CD14-positive monocyte (primary cell): ENCODE measurements at regions of chr10 and their contacts with region 1.

Region 1: DNA sequence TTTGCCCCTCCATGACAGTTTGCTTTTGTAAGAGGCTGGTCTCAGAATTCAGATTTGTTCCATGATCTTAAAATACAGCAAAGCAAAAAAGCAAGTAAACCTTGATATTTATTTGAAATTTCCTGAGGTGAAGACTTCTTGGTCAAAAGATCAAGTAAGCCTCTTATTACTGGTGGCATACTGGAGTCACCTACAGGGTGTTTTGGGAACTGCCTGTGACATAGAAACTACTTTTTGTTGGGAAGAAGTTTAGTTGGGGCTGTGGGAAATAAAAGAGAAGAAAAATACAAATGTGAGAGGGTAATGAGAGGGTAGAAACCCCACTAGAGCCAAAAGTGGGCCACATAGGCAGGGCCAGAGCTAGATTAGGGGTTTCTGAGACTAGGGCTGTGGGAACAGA is 217.9 kb downstream of the OTUD1 start:
- DNase-seq: peak; percentile 29 to 60 (median 56)
- H3K4me3 ChIP-seq: no peak overlapping the region
- H3K4me3 Mint-ChIP-seq: no peak overlapping the region
- H3K27ac ChIP-seq: no peak overlapping the region
- H3K27ac Mint-ChIP-seq: no peak overlapping the region
- H3K4me1 ChIP-seq: no peaks in the 10 kb centered on the region
- H3K4me1 Mint-ChIP-seq: peaks cover 5% of the 10 kb centered on the region
- H3K27me3 ChIP-seq: peaks cover 0 to 2% of the 10 kb centered on the region in 2 donors
- H3K27me3 Mint-ChIP-seq: peaks cover 4 to 21% (median 14%) of the 10 kb centered on the region in 3 donors
- CTCF ChIP-seq: peak; percentile 83

Region 2: DNA sequence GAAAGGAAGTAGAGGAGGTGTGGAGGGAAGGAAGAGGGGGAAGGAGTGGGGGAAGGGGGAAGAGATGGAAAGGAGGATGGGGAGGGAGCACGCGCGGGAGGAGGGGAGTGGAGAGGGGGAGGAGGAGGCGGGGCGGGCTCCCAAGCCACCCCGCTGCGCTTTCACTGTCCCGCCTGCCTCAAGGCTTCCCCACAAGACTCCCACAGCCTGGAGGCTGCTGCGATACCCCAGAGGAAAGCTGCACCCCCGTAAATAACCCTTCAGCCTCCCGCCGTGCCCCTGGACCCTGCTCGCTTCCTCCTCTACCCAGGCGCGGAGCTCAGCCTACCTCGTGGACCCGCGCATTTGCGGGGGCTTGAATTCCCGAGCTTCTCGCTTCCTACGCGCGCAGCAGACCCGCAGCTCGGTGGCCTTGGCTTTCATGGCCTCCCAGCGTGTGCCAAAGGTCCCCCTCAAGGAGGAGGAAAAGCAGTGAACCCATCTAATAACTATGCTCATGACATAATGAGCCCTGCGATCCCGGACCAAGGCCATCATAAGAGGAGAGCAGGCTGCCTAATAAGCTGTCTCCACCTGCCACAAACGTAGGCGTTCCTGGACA is 312.4 kb before region 1 on chr10 and contains the start of gene C10orf67:
- intact Hi-C with region 1: loop called in 1 of 2 experiments (anchors 10 kb)
- DNase-seq: no peak
- H3K4me3 ChIP-seq: peak within 1 kb of the TSS; percentile 3 to 63 (median 10)
- H3K4me3 Mint-ChIP-seq: peak within 1 kb of the TSS; percentile 74 to 85
- H3K27ac ChIP-seq: no peak within 1 kb of the TSS
- H3K27ac Mint-ChIP-seq: no peak within 1 kb of the TSS
- H3K4me1 ChIP-seq: peaks cover 6 to 8% of the 10 kb centered on the region in 2 donors
- H3K4me1 Mint-ChIP-seq: peaks cover 11% of the 10 kb centered on the region
- H3K27me3 ChIP-seq: peaks cover 33 to 68% of the 10 kb centered on the region in 2 donors
- H3K27me3 Mint-ChIP-seq: peaks cover 50 to 57% (median 55%) of the 10 kb centered on the region in 3 donors
- CTCF ChIP-seq: no peak
- polyA plus RNA-seq, gene C10orf67: not detected

Region 3: DNA sequence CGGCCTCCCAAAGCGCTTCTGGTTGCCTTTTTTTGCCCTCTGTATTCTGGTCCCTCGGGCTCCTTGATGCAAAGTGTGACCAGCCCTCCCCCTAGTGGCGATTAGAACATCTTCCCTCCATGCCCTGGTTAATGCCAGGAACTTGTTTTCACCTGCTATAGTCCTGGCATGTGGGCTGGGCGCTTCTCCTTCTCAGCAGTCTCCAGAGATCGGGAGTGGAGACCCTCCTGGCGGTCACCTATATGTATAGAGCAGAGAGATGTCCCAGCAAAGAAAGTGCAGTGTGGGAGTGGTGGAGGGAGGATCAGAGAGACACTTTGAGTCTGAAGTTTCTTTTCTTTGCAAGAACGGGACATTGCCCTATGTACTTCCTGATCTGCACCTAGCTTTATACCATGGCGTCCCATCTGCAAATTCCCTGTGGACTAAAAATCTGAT is 46.3 kb after region 1 on chr10:
- intact Hi-C with region 1: no loop called
- DNase-seq: peak; percentile 47 to 68 (median 54)
- H3K4me3 ChIP-seq: no peak overlapping the region
- H3K4me3 Mint-ChIP-seq: peak overlapping the region in 1 of 2 donors; percentile 39
- H3K27ac ChIP-seq: no peak overlapping the region
- H3K27ac Mint-ChIP-seq: peak overlapping the region in 1 of 7 donors; percentile 46
- H3K4me1 ChIP-seq: no peaks in the 10 kb centered on the region
- H3K4me1 Mint-ChIP-seq: peaks cover 6% of the 10 kb centered on the region
- H3K27me3 ChIP-seq: peaks cover 3 to 8% of the 10 kb centered on the region in 2 donors
- H3K27me3 Mint-ChIP-seq: peaks cover 2 to 18% (median 9%) of the 10 kb centered on the region in 3 donors
- CTCF ChIP-seq: peak; percentile 78